AG04450 (cell line): ENCODE measurements at regions of chr1 and their contacts with region 1.

Region 1: GRCh38 chr1:26417111-26417759 is 6.6 kb downstream of the LIN28A start:
- DNase-seq: peak; percentile 21
- H3K4me3 ChIP-seq: no peak overlapping the region
- H3K27ac ChIP-seq: no peak overlapping the region
- H3K27me3 ChIP-seq: peaks cover 57% of the 10 kb centered on the region
- CTCF ChIP-seq: peak; percentile 92

Region 2: DNA sequence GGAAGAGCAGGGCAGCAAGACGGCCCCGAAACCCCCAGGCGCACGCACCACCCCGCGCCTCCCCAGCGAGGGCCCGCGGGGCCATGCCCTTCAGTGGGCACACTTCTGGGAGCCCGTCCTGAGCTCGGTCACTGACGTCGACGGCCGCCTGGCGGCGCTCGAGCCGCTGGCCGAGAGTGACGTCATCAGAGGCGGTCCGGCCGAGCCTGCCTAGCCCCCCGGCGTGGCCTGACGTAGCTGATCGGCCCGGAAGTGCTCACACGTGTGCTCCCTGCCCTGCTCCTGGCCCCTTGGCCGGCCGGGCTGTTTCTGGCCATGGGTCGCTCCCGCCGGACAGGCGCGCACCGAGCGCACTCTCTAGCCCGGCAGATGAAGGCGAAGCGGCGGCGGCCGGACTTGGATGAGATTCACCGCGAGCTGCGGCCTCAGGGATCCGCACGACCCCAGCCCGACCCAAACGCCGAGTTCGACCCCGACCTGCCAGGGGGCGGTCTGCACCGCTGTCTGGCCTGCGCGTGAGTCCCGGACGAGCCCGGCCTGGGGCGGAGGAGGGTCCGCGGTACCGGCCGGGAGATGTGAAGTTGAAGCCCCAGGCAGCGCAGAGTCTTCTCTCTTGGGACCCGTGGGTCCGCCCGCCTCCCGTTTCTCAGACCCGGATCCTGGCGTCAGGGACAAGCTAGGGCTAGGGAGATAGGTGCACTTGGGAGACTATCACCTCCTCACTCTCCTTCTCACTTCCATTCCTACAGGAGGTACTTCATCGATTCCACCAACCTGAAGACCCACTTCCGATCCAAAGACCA is 247.4 kb before region 1 on chr1 and contains the start of gene ZNF593:
- CTCF ChIA-PET with region 1: interaction called, 17 read pairs
- POLR2A ChIA-PET with region 1: no interaction called
- DNase-seq: peak; percentile 62
- H3K4me3 ChIP-seq: peak within 1 kb of the TSS; percentile 87
- H3K27ac ChIP-seq: peak within 1 kb of the TSS; percentile 52
- H3K27me3 ChIP-seq: peaks cover 5% of the 10 kb centered on the region
- CTCF ChIP-seq: peak; percentile 83
- polyA plus RNA-seq, gene ZNF593: 19.7 and 28.6 TPM in 2 replicates

Region 3: GRCh38 chr1:26284597-26285360 is 132.5 kb before region 1 on chr1:
- CTCF ChIA-PET with region 1: interaction called, 24 read pairs
- POLR2A ChIA-PET with region 1: no interaction called
- DNase-seq: peak; percentile 70
- H3K4me3 ChIP-seq: no peak overlapping the region
- H3K27ac ChIP-seq: peak overlapping the region; percentile 84
- H3K27me3 ChIP-seq: no peaks in the 10 kb centered on the region
- CTCF ChIP-seq: peak; percentile 72

Region 4: GRCh38 chr1:26378088-26378878 is 39.0 kb before region 1 on chr1:
- CTCF ChIA-PET with region 1: interaction called, 13 read pairs
- POLR2A ChIA-PET with region 1: no interaction called
- DNase-seq: peak; percentile 92
- H3K4me3 ChIP-seq: peak overlapping the region; percentile 37
- H3K27ac ChIP-seq: peak overlapping the region; percentile 98
- H3K27me3 ChIP-seq: no peaks in the 10 kb centered on the region
- CTCF ChIP-seq: no peak

Region 5: GRCh38 chr1:26399034-26399433 is 18.2 kb before region 1 on chr1:
- CTCF ChIA-PET with region 1: interaction called, 47 read pairs
- POLR2A ChIA-PET with region 1: no interaction called
- DNase-seq: no peak
- H3K4me3 ChIP-seq: no peak overlapping the region
- H3K27ac ChIP-seq: no peak overlapping the region
- H3K27me3 ChIP-seq: no peaks in the 10 kb centered on the region
- CTCF ChIP-seq: no peak